ENCODE measurements at regions of chr5 and their contacts with region 1.

Region 1: DNA sequence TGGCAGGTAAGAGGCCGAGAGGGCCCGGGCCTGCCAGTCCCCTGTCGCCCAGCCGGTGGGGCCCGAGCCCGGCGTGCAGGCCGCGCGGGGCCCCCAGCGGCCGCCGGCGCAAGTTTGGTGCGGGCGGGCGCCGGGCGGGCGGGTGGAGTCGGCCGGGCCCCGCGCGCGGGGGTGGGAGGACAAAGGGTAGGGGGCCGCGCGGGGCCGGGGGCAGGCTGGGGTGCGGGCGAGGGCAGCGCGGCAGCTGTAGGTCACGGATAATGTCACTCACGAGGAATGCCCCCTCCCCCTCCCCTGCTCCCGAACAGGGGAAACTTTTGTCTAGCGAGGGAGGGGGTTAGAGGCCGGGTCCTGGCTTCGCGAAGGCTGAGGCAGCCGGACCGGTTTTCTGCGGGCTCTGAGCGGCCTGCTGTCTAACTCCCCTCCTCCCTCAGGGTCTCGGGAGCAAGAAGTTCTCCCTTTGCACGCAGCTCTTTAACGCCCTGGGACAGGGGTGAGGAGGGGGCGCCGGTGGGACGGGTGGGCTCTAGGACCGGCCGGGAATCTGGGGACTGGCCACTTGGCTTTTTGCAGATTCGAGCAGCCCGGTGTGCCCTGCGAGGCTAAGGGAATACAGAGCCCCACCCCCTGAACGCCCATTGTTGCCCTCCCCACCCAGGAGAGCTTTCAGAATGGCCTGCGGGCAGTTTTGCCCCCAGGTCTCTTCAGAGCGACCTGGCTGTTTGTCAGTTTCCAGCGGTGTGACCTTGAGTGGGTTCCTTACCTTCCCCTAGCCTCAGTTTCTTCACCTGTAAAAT is 21.3 kb upstream of the NDST1 start:
- DNase-seq: peak in 1 of 2 donors; percentile 58
- ATAC-seq: peak; percentile 35 to 46
- H3K4me3 ChIP-seq: peak overlapping the region; percentile 80 to 100 (median 94)
- H3K27ac ChIP-seq: peak overlapping the region; percentile 83 to 98 (median 95)
- H3K4me1 ChIP-seq: peaks cover 48 to 49% of the 10 kb centered on the region in 2 donors
- H3K27me3 ChIP-seq: no peaks in the 10 kb centered on the region
- CTCF ChIP-seq: peak in 1 of 5 experiments; percentile 9
- POLR2A ChIP-seq: no peak

Region 2: DNA sequence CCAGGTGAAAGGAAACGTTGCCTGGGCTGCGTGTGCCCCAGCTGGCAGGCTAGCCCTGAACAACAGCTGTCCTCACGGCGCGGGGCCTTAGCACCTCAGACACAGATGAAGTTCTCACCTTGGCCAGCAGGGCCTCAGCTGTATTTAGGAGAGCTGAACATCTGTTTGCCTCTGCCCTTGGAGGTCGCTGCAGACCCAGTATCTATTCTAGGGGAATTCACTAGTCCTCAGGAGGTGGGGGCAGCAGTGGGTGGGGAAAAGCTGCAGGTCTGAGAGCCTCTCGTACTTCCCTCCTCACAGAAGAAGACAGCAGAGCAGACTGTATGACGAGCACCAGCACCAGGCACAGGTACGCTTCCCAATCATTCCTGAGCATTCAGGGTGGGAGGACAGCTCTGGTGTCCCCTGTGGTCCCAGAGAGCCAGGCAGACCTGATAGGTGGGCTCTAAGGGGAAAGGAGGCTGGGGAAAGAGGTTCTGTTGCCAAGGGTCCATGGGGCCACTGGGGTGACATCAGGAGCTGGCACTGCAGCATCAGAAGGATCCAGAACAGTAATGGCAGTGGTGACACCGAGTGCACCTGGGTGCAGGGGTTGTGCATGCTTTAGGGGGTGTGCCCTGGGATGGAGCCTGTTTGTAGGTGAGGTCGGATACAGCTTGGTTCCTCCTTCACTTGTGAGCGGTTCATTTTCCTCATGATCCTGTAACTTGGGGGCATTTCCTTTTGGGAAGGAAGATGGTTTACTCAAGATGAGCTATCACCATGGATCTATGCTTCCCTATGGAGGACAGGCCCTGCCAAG is 87.7 kb before region 1 on chr5:
- in situ Hi-C with region 1: no loop called
- intact Hi-C with region 1: no loop called
- DNase-seq: no peak
- ATAC-seq: no peak
- H3K4me3 ChIP-seq: no peak overlapping the region
- H3K27ac ChIP-seq: no peak overlapping the region
- H3K4me1 ChIP-seq: no peaks in the 10 kb centered on the region
- H3K27me3 ChIP-seq: no peaks in the 10 kb centered on the region
- CTCF ChIP-seq: no peak
- POLR2A ChIP-seq: no peak

Region 3: DNA sequence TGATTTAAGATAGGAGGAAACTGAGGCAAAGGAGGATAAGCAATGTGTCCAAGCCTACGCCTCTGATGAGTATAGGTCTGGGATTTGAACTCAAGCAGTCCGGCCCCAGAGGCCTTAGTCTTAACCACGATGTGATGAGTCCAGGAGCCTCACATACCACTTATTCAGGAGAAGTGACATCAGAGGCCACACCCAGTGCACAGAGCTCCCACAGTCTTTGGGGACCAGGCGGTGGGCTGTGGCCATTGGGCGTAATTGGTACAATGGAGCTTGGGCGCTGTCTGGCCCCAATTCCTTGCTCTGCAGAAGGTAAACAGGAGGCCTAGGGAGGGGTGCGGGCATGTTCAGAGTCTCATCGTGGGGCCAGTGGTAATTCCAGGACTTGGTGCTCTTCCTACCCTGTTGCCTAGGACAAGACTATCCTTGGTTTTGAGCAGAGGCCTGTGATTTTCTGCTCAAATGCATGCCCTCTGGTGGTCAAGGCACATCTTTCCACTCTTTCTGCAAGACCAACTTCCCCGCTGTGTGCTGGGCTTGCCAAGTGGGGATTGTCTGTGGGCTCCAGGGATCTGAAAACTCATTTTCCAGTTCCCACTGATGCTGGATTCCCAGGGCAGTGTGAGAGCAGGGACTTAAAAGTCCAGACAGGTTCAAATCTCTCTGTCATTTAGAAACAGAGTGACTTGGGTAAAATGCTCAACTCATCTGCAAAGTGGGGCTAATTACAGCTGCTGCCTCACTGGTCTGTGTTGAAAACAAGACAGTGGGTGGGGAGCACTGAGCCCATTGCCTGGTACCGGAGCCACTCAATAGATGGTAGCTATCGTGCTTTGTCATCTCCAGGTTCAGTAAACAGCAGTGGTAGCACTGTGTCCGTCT is 37.1 kb after region 1 on chr5:
- in situ Hi-C with region 1: no loop called
- intact Hi-C with region 1: loop called (anchors 2 kb)
- DNase-seq: peak in 1 of 2 donors; percentile 46
- ATAC-seq: peak; percentile 42 to 58
- H3K4me3 ChIP-seq: no peak overlapping the region
- H3K27ac ChIP-seq: peak overlapping the region; percentile 21 to 79 (median 75)
- H3K4me1 ChIP-seq: peaks cover 55 to 62% of the 10 kb centered on the region in 2 donors
- H3K27me3 ChIP-seq: no peaks in the 10 kb centered on the region
- CTCF ChIP-seq: peak; percentile 52 to 70 (median 62)
- POLR2A ChIP-seq: no peak

Region 4: DNA sequence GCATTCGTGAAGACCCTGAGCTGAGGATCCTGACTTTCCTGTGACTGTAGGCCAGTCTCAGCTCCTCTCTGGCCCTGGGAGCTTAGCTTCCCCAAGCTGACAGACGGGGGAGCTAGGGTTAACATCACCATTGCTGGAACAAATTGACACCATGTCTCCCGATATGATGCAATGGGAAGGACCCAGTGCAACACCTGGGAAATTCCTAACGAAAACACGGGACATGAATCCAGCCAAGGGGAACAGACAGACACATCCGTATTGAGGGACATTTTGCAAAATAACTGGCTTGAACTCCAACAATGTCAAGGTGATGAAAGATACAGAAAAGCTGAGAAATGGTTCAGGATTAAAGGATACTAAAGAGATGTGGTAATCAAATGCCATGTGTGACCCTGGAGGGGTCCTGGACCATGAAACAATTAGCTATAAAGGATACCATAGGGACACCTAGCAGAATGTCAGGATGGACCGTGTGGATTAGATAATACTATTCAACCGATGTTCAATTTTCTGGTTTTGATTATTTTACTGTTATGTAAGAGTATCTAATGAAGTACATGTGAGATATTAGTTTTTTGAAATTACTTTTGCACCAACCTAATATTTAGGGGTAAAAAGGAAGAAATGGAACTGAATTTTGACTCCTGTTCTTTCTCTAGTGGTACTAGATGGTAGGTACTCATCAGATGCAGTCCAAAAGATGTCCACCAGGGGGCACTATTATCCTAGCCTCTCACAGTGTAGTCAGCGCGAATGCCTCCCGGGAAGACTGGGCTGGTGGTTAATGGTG is 74.0 kb after region 1 on chr5:
- in situ Hi-C with region 1: no loop called
- intact Hi-C with region 1: no loop called
- DNase-seq: peak; percentile 78 to 81
- ATAC-seq: peak; percentile 86 to 89
- H3K4me3 ChIP-seq: no peak overlapping the region
- H3K27ac ChIP-seq: no peak overlapping the region
- H3K4me1 ChIP-seq: peaks cover 16 to 19% of the 10 kb centered on the region in 2 donors
- H3K27me3 ChIP-seq: no peaks in the 10 kb centered on the region
- CTCF ChIP-seq: peak; percentile 84 to 97 (median 94)
- POLR2A ChIP-seq: no peak

Measured in gastrocnemius medialis (tissue), 4 donors.